ENCODE measurements at regions of chr18 and their contacts with region 1.

Region 1: GRCh38 chr18:12890506-12890905 is 6.5 kb upstream of the PTPN2 start:
- DNase-seq: no peak
- H3K4me3 Mint-ChIP-seq: no peak overlapping the region
- H3K27ac Mint-ChIP-seq: no peak overlapping the region
- H3K4me1 Mint-ChIP-seq: peaks cover 33% of the 10 kb centered on the region
- H3K27me3 Mint-ChIP-seq: peaks cover 7% of the 10 kb centered on the region

Region 2: DNA sequence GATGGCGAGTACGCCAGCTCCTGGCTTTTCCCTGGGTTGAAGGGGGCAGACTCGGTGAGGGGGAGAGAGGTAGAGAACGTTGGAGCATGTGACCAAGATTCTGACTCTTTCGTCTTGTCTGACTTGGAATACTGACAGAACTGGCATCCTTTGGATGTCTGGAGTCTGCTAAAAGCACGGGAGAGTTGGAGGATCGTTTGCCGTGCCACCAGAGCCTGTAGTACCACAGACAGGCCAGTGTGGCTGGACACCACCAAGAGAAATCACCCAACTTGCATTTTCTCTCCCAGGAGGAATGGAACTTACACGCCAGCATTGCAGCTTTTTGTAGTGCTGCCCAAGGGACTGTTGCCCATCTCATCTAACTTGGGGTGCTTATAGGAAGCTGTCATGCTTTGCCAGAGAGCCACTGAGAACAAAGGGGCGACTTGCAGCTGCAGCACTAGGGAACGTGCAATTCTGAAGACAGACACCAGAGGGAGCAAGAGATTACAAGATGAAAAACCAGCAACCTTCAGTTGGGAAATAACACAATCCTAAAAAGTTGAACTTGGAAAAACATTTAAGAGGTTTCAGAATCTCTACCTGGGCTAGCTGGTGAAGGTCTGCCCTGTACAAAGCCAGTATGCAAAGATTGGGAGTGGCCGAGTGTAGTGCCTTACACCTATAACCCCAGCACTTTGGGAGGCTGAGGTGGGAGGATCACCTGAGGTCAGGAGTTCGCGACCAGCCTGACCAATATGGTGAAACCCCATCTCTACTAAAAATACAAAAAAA is 163.5 kb before region 1 on chr18:
- intact Hi-C with region 1: loop called (anchors 1 kb)
- DNase-seq: peak; percentile 37
- H3K4me3 Mint-ChIP-seq: no peak overlapping the region
- H3K27ac Mint-ChIP-seq: peak overlapping the region; percentile 71
- H3K4me1 Mint-ChIP-seq: peaks cover 11% of the 10 kb centered on the region
- H3K27me3 Mint-ChIP-seq: no peaks in the 10 kb centered on the region

Region 3: GRCh38 chr18:12744103-12744502 is 146.4 kb before region 1 on chr18:
- intact Hi-C with region 1: loop called (anchors 1 kb)
- DNase-seq: no peak
- H3K4me3 Mint-ChIP-seq: no peak overlapping the region
- H3K27ac Mint-ChIP-seq: no peak overlapping the region
- H3K4me1 Mint-ChIP-seq: peaks cover 2% of the 10 kb centered on the region
- H3K27me3 Mint-ChIP-seq: no peaks in the 10 kb centered on the region

Region 4: DNA sequence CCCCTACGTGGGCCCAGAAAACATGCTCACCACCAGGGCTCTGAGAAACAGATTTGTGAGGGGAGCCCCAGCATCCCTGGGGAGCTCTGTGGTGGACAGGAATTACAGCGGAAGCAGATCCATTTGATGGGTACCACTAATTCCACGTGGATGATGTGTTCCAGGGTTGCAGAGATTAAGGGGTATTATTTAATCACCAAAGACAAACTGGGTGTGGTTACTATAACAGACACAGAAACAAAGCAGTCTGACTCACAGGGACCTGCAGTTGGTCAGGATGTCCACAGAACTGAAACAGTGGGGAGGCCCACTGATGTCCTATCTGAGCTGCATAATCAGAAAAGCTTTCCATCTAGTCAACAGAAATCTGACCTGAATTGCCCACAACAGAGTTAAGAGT is 121.9 kb before region 1 on chr18:
- intact Hi-C with region 1: no loop called
- DNase-seq: no peak
- H3K4me3 Mint-ChIP-seq: no peak overlapping the region
- H3K27ac Mint-ChIP-seq: no peak overlapping the region
- H3K4me1 Mint-ChIP-seq: peaks cover 7% of the 10 kb centered on the region
- H3K27me3 Mint-ChIP-seq: no peaks in the 10 kb centered on the region

Measured in activated T-helper 1 cell treated with anti-CD3 and anti-CD28 coated beads, Interleukin-12 subunit alpha, Interleukin-12 subunit beta, Interleukin-2, Interleukin-4 antibody, amounts not matched to agents 30 ng/mL and 10 ng/mL and 1 ng/mL, durations not matched to agents 14 hours and 24 hours and 36 hours (primary cell).